ENCODE measurements at regions of chr1 and their contacts with region 1.

Region 1: DNA sequence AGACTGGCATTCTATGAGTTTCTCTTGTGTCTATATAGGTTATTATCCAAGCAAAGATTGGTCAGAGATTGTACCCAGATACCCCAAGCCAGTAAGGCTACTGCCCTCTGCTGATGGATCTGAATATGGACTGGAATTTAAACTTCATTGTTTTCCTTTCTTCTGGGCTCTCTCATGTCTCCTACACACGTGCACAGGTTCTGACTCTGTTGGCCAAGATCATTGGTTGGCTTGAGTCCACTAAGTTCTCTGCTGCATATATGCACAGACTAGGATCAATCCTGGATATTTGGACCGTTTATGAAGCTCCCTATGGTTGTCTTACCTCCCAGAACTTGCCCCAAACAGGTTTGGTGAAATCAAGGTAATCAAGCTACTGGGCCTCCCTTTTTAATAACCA is 69.7 kb downstream of the CC2D1B start:
- DNase-seq: no peak
- H3K4me3 ChIP-seq: no peak overlapping the region
- H3K27ac ChIP-seq: no peak overlapping the region
- H3K4me1 ChIP-seq: no peaks in the 10 kb centered on the region
- H3K27me3 ChIP-seq: no peaks in the 10 kb centered on the region
- CTCF ChIP-seq: peak in 2 of 3 experiments; percentile 64 to 73; a peak in 3 of 4 replicates
- EP300 ChIP-seq: no peak
- POLR2A ChIP-seq: no peak
- RAD21 ChIP-seq: peak; percentile 77 to 81

Region 2: GRCh38 chr1:52008071-52008809 is 288.1 kb before region 1 on chr1:
- CTCF ChIA-PET with region 1: no interaction called
- POLR2A ChIA-PET with region 1: no interaction called
- DNase-seq: no peak
- H3K4me3 ChIP-seq: no peak overlapping the region
- H3K27ac ChIP-seq: no peak overlapping the region
- H3K4me1 ChIP-seq: peaks cover 5 to 14% (median 12%) of the 10 kb centered on the region in 4 experiments; a peak in 6 of 7 replicates
- H3K27me3 ChIP-seq: no peaks in the 10 kb centered on the region
- CTCF ChIP-seq: no peak
- EP300 ChIP-seq: no peak
- POLR2A ChIP-seq: no peak
- RAD21 ChIP-seq: no peak

Region 3: GRCh38 chr1:52306227-52307006 is 10.1 kb after region 1 on chr1:
- CTCF ChIA-PET with region 1: interaction called, 25 read pairs
- POLR2A ChIA-PET with region 1: no interaction called
- DNase-seq: no peak
- H3K4me3 ChIP-seq: no peak overlapping the region
- H3K27ac ChIP-seq: no peak overlapping the region
- H3K4me1 ChIP-seq: no peaks in the 10 kb centered on the region
- H3K27me3 ChIP-seq: no peaks in the 10 kb centered on the region
- CTCF ChIP-seq: no peak
- EP300 ChIP-seq: no peak
- POLR2A ChIP-seq: no peak
- RAD21 ChIP-seq: no peak